ENCODE measurements at regions of chr9 and their contacts with region 1.

Region 1: DNA sequence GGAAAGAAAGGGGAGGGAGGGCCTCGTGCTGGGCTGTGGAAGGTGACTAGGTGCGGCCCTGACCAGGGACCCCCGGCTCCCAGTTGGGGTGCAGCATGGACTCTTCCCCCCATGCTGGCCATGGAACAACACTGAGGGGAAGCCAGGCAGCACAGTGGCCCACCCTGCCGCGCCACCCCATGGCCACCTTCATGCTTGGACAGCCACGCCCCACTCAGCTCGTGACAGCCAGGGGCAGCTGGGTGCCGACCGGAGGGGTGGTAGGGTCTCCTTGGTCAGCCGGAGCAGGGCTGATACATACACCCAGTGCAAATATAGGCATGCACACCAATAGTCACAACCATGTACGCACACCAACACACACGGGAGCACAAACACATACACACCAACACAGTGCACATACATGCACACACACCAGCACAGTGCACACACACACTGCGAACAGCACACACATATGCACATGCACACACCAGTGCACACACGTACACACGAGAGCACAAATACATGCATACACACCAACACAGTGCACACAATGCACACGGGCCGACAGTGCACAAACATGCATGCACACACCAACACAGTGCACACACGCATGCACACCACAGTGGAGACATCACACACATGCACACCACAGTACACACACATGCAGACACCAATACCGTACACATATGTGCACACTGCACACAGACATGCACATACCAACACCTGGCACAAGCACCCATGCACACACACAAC is 8.3 kb downstream of the SOHLH1 start:
- DNase-seq: no peak
- ATAC-seq: no peak
- H3K4me3 ChIP-seq: no peak overlapping the region
- H3K27ac ChIP-seq: no peak overlapping the region
- H3K4me1 ChIP-seq: no peaks in the 10 kb centered on the region
- H3K27me3 ChIP-seq: peaks cover 0 to 5% (median 0%) of the 10 kb centered on the region in 3 donors
- CTCF ChIP-seq: no peak
- POLR2A ChIP-seq: no peak

Region 2: GRCh38 chr9:135671591-135672041 is 19.4 kb before region 1 on chr9:
- in situ Hi-C with region 1: no loop called
- intact Hi-C with region 1: loop called (anchors 2 kb)
- DNase-seq: no peak
- ATAC-seq: no peak
- H3K4me3 ChIP-seq: no peak overlapping the region
- H3K27ac ChIP-seq: no peak overlapping the region
- H3K4me1 ChIP-seq: no peaks in the 10 kb centered on the region
- H3K27me3 ChIP-seq: peaks cover 4 to 17% (median 11%) of the 10 kb centered on the region in 3 donors
- CTCF ChIP-seq: no peak
- POLR2A ChIP-seq: no peak

Region 3: DNA sequence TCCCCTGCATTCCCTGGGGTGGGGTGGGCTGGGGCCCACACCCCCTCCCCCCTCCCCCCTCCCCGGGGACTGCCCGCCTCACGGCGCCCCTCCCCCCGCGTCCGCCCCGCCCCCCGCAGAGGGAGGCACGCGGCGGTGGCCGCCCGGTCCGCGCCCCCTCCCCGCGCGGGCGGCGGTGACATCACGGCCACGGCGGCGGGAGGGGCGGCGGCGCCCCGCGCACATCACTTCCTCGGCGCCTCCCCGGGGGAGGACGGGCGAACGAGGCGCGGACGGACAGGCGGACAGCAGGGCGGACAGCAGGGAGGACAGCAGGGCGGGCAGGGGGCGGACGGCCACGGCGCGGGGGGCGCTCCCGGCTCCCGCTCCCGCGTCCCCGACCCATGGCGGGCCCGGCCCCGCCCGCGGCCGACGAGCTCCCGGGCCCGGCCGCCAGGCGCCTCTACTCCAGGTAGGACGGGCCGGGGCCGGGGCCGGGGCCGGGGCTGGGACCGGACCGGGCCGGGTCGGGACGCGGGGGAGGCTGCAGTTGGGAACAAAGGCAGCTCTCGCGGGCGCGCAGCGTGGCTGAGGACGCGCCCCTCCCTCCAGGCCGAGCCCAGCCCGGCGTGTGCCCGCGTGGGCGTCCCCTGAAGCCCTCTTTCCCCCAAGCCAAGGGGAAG is 636.4 kb after region 1 on chr9 and contains the start of gene GPSM1:
- in situ Hi-C with region 1: no loop called
- intact Hi-C with region 1: no loop called
- DNase-seq: no peak
- ATAC-seq: peak in 1 of 2 donors; percentile 34
- H3K4me3 ChIP-seq: peak within 1 kb of the TSS; percentile 46 to 57 (median 52)
- H3K27ac ChIP-seq: peak within 1 kb of the TSS; percentile 22 to 44 (median 32)
- H3K4me1 ChIP-seq: peaks cover 0 to 11% of the 10 kb centered on the region in 2 donors
- H3K27me3 ChIP-seq: peaks cover 6 to 24% (median 16%) of the 10 kb centered on the region in 3 donors
- CTCF ChIP-seq: no peak
- POLR2A ChIP-seq: peak; percentile 23 to 26
- total RNA-seq, gene GPSM1: 0.98 to 1.7 (median 1.2) TPM in 3 of 4 donors, not detected in the other

Measured in gastrocnemius medialis (tissue), 4 donors.